Ascending aorta (tissue), 2 donors: ENCODE measurements at regions of chr2 and their contacts with region 1.

Region 1: GRCh38 chr2:189347540-189347939 is 93.7 kb upstream of the WDR75 start:
- DNase-seq: peak in 1 of 2 donors; percentile 74
- H3K4me3 ChIP-seq: no peak overlapping the region
- H3K27ac ChIP-seq: peak overlapping the region; percentile 75 to 76
- H3K4me1 ChIP-seq: peaks cover 3 to 28% of the 10 kb centered on the region in 2 donors
- H3K27me3 ChIP-seq: no peaks in the 10 kb centered on the region
- CTCF ChIP-seq: peak in 2 of 3 experiments; percentile 35 to 47

Region 2: DNA sequence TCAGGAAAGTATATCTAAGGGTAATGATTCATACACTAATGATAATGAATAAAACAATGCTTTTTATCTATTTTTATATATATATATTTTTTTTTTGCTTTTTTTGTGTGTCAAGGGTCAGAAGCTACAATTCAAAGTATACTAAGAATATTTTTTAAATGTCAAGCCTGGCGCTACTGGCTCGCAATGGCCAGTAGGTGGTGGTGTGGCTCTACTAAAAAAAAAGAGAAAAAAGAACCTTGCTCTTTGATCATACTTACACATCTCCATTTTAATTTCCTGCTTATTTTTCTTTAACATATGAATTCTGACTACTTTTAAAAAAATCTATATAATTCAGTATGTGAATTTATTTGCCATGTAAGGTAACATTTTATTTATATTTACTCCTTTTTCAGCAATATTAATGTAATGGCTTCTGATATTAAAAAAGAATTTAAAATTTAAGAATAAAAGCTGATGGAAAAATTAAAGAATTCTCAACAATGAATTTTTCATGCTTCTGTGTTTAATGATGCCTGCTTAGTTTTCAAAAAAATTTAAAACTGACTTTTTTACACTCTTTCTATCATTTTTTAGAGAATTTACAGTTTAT is 822.9 kb before region 1 on chr2:
- intact Hi-C with region 1: loop called (anchors 5 kb)
- DNase-seq: no peak
- H3K4me3 ChIP-seq: no peak overlapping the region
- H3K27ac ChIP-seq: peak overlapping the region in 1 of 2 donors; percentile 4
- H3K4me1 ChIP-seq: peaks cover 0 to 13% of the 10 kb centered on the region in 2 donors
- H3K27me3 ChIP-seq: no peaks in the 10 kb centered on the region
- CTCF ChIP-seq: peak; percentile 46 to 83 (median 76)

Region 3: DNA sequence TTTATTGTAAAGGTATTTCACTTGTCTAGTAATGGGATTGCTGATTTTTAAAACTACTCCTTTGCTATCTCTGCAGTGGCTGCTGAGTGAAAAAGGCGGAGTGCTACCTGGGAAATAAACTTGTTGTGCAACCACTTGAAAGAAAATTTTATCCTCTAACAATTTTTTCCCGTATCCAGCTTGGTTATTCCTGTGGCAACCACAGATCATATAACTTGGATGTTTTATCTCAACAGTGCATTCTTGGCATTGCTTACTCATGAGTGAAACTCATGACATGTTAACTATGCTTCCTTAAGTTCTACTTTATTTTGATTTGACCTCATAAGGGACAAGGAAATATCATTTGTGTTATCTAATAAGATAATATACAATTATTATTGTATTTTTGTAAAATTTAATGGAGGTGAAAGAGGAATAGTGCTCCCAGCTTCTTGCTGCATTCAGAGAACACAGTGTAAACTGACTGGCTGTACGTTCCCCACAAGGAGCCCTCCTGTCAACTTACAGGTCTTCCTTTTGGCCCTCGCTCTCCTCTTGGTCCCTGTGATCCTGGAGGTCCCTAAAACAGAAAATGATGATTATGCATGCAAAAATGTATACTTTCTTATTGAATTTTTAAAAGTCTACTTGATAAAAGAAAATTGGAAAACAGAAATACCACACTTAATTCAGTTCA is 250.6 kb before region 1 on chr2:
- intact Hi-C with region 1: loop called (anchors 1 kb)
- DNase-seq: no peak
- H3K4me3 ChIP-seq: no peak overlapping the region
- H3K27ac ChIP-seq: no peak overlapping the region
- H3K4me1 ChIP-seq: peaks cover 0 to 19% of the 10 kb centered on the region in 2 donors
- H3K27me3 ChIP-seq: no peaks in the 10 kb centered on the region
- CTCF ChIP-seq: no peak

Region 4: GRCh38 chr2:189115126-189115525 is 232.4 kb before region 1 on chr2:
- intact Hi-C with region 1: loop called (anchors 5 kb)
- DNase-seq: no peak
- H3K4me3 ChIP-seq: peak overlapping the region in 1 of 2 donors; percentile 23
- H3K27ac ChIP-seq: no peak overlapping the region
- H3K4me1 ChIP-seq: peaks cover 0 to 26% of the 10 kb centered on the region in 2 donors
- H3K27me3 ChIP-seq: no peaks in the 10 kb centered on the region
- CTCF ChIP-seq: peak in 2 of 3 experiments; percentile 16 to 32

Region 5: DNA sequence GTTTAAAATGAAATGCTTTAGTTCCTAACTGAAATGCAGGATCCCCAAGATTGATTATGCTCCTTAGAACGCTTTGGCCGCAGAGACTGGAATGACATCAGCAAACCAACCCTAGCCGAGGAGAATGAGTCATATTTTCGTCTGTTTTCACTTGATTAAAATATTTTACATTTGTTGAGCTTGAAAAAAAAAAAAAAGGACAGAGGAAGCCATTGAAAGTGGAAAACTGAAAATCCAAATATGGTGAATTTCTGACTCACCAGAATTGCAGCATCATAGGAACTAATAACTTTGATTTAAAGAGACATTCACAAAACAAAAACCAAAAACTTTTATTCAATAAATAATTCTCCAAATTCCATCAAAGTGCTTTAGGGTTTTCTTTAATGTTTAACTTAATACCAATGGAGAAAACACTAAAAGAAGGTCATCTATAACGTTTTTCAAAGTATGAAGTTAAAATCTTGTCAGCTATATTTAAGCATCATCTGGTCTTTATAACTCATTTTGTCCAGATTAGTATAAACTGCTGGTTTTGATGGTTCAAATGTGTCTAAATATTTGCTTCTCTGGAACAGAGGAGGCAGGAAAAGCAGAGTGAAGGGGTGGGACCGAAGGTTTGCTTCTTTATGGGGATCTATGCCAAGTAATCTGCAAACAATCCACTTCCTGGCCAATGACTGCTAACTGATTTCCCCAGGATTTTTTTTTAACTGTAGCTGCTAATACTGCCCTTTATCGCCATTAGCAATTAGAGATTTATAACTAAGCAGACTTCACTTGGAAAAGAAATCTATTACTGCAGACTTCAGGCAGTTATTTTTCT is 137.1 kb before region 1 on chr2:
- intact Hi-C with region 1: loop called (anchors 2 kb)
- DNase-seq: peak in 1 of 2 donors; percentile 86
- H3K4me3 ChIP-seq: peak overlapping the region; percentile 35 to 50
- H3K27ac ChIP-seq: peak overlapping the region; percentile 81 to 89
- H3K4me1 ChIP-seq: peaks cover 0 to 21% of the 10 kb centered on the region in 2 donors
- H3K27me3 ChIP-seq: no peaks in the 10 kb centered on the region
- CTCF ChIP-seq: no peak

Region 6: DNA sequence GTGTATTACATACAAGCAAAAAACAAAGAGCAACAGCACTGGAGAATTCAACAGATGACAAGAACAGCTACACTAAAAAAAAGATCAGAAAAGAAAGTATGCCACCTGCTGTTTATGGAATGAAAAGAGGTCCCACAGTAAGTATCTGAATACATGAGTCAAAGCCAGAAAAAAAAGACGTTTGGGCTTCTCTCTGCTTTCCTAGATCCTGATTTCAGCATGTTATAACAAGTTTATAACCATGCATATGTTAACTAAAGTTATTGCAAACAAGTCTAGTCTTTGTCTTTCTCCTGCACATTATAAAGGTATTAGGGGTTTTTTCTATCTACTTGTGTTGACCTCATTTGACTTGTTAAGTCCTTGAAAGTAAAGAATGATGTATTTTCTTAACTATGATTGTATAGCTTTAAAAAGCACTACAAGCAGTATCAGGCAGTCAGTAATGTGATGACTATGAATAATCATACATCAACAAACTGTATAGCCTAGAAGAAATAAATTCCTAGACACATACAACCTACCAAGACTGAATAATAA is 59.5 kb before region 1 on chr2:
- intact Hi-C with region 1: loop called (anchors 5 kb)
- DNase-seq: no peak
- H3K4me3 ChIP-seq: no peak overlapping the region
- H3K27ac ChIP-seq: no peak overlapping the region
- H3K4me1 ChIP-seq: peaks cover 2 to 11% of the 10 kb centered on the region in 2 donors
- H3K27me3 ChIP-seq: no peaks in the 10 kb centered on the region
- CTCF ChIP-seq: peak; percentile 29 to 66 (median 52)

Region 7: GRCh38 chr2:189298481-189298880 is 49.1 kb before region 1 on chr2:
- intact Hi-C with region 1: no loop called
- DNase-seq: no peak
- H3K4me3 ChIP-seq: no peak overlapping the region
- H3K27ac ChIP-seq: no peak overlapping the region
- H3K4me1 ChIP-seq: peaks cover 0 to 2% of the 10 kb centered on the region in 2 donors
- H3K27me3 ChIP-seq: no peaks in the 10 kb centered on the region
- CTCF ChIP-seq: no peak

Region 8: GRCh38 chr2:189369566-189369965 is 22.0 kb after region 1 on chr2:
- intact Hi-C with region 1: loop called (anchors 1 kb)
- DNase-seq: no peak
- H3K4me3 ChIP-seq: no peak overlapping the region
- H3K27ac ChIP-seq: peak overlapping the region; percentile 71 to 81
- H3K4me1 ChIP-seq: peaks cover 0 to 29% of the 10 kb centered on the region in 2 donors
- H3K27me3 ChIP-seq: no peaks in the 10 kb centered on the region
- CTCF ChIP-seq: no peak